ENCODE measurements at regions of chr14 and their contacts with region 1.

Region 1: GRCh38 chr14:66070509-66071319 is 415.5 kb upstream of the CCDC196 start:
- DNase-seq: peak; percentile 39
- H3K4me3 ChIP-seq: no peak overlapping the region
- H3K27ac ChIP-seq: no peak overlapping the region
- H3K4me1 ChIP-seq: no peaks in the 10 kb centered on the region
- H3K27me3 ChIP-seq: peaks cover 0 to 6% of the 10 kb centered on the region in 2 experiments
- CTCF ChIP-seq: peak; percentile 78 to 88
- POLR2A ChIP-seq: no peak

Region 2: GRCh38 chr14:65791191-65791981 is 279.3 kb before region 1 on chr14:
- CTCF ChIA-PET with region 1: no interaction called
- POLR2A ChIA-PET with region 1: no interaction called
- dilution Hi-C with region 1: no loop called
- intact Hi-C with region 1: no loop called
- DNase-seq: peak; percentile 34
- H3K4me3 ChIP-seq: no peak overlapping the region
- H3K27ac ChIP-seq: no peak overlapping the region
- H3K4me1 ChIP-seq: no peaks in the 10 kb centered on the region
- H3K27me3 ChIP-seq: no peaks in the 10 kb centered on the region
- CTCF ChIP-seq: no peak
- POLR2A ChIP-seq: no peak

Region 3: DNA sequence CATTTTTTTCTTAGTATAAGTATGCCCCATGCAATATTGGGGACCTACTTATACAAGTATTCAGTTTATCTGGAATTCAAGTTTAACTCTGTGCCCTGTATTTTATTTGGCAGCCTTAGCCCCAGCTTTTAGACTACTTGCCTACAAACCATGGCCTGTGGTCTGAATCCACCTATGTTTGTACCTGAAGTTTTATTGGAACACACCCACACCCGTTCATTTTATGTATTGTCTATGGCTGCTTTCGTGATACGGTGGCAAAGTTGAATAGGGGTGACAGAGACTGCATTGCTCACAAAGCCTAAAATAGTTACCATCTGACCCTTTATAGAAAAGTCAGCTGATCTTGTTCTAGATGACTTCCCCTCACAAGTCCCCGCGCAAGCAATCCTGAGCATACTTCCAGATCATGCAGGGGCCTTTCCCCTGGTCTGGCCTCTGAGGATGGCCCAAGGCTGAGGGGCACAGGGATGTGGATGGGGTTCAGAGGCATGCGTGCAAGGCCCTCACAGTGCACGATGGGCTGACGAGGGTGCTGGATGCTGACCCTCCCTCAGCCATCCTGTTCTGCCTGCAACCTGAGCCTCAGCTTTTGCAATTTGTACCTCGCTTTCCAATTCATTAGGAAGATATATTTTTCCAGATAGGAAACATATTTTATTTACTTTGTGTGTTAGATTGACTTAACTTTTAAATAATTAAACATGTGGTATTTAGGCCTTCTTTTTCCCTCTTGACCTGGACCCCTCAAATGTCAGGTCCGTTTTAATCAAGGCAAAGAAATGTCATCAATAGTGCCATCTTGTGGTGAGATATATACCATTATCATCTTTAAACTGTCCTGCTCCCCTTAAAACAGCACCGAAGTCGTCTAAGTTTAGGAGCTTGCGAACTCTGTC is 111.8 kb before region 1 on chr14:
- CTCF ChIA-PET with region 1: interaction called, 4 read pairs
- POLR2A ChIA-PET with region 1: no interaction called
- dilution Hi-C with region 1: no loop called
- intact Hi-C with region 1: loop called (anchors 1 kb)
- DNase-seq: peak; percentile 35
- H3K4me3 ChIP-seq: no peak overlapping the region
- H3K27ac ChIP-seq: no peak overlapping the region
- H3K4me1 ChIP-seq: no peaks in the 10 kb centered on the region
- H3K27me3 ChIP-seq: no peaks in the 10 kb centered on the region
- CTCF ChIP-seq: peak; percentile 5 to 16
- POLR2A ChIP-seq: no peak

Region 4: GRCh38 chr14:66015071-66015780 is 55.5 kb before region 1 on chr14:
- CTCF ChIA-PET with region 1: no interaction called
- POLR2A ChIA-PET with region 1: no interaction called
- dilution Hi-C with region 1: no loop called
- intact Hi-C with region 1: no loop called
- DNase-seq: no peak
- H3K4me3 ChIP-seq: no peak overlapping the region
- H3K27ac ChIP-seq: no peak overlapping the region
- H3K4me1 ChIP-seq: no peaks in the 10 kb centered on the region
- H3K27me3 ChIP-seq: no peaks in the 10 kb centered on the region
- CTCF ChIP-seq: no peak
- POLR2A ChIP-seq: no peak

Region 5: GRCh38 chr14:66056926-66057552 is 13.7 kb before region 1 on chr14:
- CTCF ChIA-PET with region 1: interaction called, 11 read pairs
- POLR2A ChIA-PET with region 1: no interaction called
- dilution Hi-C with region 1: no loop called
- intact Hi-C with region 1: no loop called
- DNase-seq: no peak
- H3K4me3 ChIP-seq: no peak overlapping the region
- H3K27ac ChIP-seq: no peak overlapping the region
- H3K4me1 ChIP-seq: no peaks in the 10 kb centered on the region
- H3K27me3 ChIP-seq: no peaks in the 10 kb centered on the region
- CTCF ChIP-seq: no peak
- POLR2A ChIP-seq: no peak